ENCODE measurements at regions of chr20 and their contacts with region 1.

Region 1: DNA sequence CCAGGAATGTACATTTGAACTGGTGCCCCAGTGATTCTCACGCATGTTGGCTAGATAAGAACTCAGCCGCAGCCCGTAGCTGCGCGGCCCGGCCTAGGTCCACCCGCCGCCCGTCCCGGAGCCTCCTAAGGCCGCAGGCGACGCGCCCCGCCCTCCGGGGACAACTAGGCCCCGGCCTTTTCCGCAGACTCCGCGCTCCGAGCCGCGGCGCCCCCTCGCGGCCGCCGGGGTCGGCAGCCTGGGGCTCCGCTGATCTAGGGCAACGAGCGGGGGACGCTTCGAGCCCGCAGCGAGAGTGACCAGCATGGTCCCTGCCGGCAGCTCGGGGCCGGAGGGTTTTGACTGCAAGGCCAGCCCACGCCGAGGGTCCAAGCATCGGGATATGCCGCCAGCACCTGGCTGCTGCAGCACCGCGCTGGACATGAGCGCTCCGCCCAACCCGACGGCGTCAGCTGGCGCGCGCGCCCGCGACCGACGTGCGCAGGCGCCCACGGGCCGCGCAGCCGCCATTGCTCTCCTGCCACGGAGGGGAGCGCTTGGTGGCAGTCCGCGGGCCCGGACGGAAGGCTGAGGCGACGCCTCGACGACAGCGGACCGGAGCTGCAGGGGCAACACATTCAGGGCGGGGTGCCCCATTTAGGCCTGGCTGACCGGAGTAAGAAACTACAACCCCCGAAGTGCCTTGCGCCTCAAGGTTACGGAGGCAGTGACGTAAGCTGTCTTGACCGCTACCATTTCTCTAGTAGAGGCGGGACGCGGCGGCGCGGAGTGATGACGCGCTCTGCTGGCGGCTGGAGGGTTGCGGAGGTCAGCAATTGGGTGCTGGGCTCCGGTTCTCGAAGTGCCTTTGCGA is at the start of gene AP5S1:
- DNase-seq: peak; percentile 92 to 99 (median 98)

Region 2: GRCh38 chr20:3767427-3768341 is 52.6 kb before region 1 on chr20 and contains the start of gene ADISSP:
- intact Hi-C with region 1: loop called (anchors 2 kb)
- DNase-seq: peak; percentile 98 to 100 (median 99)

Region 3: DNA sequence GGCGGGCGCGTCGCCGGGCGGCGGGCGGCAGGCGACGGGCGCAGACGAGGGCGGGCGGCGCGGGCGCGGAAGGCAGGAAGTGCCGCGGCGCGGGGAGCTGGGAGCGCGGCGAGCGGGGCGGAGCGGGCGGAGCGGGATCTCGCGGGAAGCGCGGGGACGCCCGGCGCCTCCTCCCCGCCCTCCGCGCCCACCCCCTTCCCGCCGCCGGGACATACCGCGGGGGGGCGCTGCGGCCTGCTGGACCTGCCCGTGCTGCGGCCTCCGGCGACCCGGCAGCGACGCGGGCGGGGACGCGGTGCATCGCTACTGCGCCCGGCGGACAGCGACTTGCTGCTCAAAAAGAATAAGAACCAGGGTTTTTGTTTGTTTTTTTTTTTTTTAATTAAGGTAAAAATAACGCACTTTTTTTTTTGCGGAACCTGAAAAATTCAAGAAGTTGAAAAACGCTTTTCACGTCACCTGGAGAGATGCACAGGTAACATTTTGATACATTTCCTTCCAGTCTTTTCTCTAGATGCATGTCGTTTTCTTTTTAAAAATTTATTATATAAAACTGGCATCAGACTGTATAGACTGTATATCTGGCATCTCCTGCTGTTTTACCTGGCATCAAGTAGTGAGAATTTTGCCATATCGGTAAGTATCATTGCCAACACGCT is 33.5 kb before region 1 on chr20 and contains the start of gene CENPB:
- intact Hi-C with region 1: loop called (anchors 2 kb)
- DNase-seq: peak; percentile 74 to 96 (median 92)

Measured in head of caudate nucleus (tissue), 42 donors.